Left ventricle myocardium superior (tissue), 1 donor: ENCODE measurements at regions of chr11 and their contacts with region 1.

Region 1: GRCh38 chr11:126062679-126063506 is at the start of gene CDON:
- DNase-seq: peak; percentile 96
- ATAC-seq: peak; percentile 99
- total RNA-seq, gene CDON: 15.9 TPM

Region 2: GRCh38 chr11:125724125-125724524 is 338.8 kb before region 1 on chr11:
- intact Hi-C with region 1: no loop called
- DNase-seq: no peak
- ATAC-seq: no peak

Region 3: DNA sequence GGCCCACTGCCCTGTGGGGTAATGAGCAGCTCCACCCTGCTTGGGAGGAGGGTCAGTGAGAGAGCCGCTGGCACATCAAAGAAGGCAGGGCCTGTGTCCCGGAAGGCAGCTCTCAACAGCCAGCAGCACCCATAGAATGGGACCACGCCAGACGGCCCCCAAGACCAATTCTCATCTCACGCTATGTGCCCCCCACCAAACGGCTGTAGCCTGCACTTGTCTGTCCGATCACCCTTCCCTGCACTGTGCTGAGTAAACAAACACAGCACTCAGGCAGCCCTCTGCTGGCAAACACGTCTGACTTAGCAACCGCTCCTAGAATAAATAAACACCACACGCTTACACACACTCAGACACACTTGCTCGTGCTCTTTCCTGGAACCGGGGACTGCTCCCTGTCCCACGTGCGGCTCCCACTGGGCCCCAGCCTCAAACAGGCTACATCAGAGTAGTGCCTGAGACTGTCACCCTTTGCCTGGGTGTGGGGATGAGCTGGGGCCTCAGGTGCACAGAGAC is 53.0 kb after region 1 on chr11:
- intact Hi-C with region 1: loop called (anchors 10 kb)
- DNase-seq: peak; percentile 79
- ATAC-seq: peak; percentile 76

Region 4: GRCh38 chr11:126268708-126269579 is 206.1 kb after region 1 on chr11 and contains the starts of genes FOXRED1 and SRPRA:
- intact Hi-C with region 1: no loop called
- DNase-seq: peak; percentile 100
- ATAC-seq: peak; percentile 99
- total RNA-seq, gene FOXRED1: 29.1 TPM
- total RNA-seq, gene SRPRA: 68.6 TPM